BJ (cell line): ENCODE measurements at regions of chr16 and their contacts with region 1.

Region 1: GRCh38 chr16:29877266-29877961 is 14.4 kb upstream of the CDIPT start:
- DNase-seq: no peak
- H3K4me3 ChIP-seq: no peak overlapping the region
- H3K27me3 ChIP-seq: peaks cover 4% of the 10 kb centered on the region; the same call in 1 of the 2 replicates
- CTCF ChIP-seq: no peak

Region 2: DNA sequence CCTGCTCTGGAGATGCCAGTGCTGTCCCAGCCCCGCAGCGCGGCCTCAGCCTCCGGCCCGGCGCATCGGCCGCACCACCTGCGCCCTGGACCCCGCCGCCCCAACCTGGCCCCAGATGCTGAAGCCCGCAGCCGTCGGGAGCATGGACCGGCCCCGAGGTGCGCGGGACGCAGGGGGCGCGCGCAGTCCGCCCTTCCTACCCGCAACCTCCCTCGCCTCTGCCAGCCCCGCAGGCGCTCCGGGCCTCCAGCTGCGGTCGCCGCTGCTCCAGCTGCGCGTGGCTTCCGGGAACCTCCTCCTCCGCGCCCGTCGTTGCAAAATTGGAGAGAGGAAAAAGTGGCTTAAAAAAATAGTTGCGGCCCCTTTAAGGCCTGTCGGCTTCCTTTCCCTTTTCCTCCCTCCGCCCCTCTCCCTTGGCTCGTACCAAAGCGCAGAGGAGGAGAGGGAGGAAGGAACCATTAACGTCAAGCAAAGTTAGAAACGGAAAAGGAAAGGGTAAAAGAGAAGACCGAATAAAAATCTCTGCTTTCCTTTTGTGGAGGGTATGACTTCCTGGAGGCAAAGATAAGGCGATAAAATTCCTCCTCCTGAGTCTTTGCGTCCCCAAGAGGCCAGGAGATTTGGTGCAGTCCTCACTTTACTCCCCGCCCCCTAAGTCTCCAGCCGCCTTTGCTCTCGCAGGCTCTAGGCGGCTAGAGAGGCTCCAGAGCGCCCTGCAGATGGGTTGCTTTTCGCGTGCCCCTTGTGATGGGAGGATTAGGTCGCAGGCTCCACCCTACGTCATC is 14.3 kb before region 1 on chr16 and contains the start of gene CDIPT:
- CTCF ChIA-PET with region 1: interaction called, 10 read pairs
- POLR2A ChIA-PET with region 1: no interaction called
- DNase-seq: peak; percentile 61
- H3K4me3 ChIP-seq: peak within 1 kb of the TSS; percentile 87
- H3K27me3 ChIP-seq: no peaks in the 10 kb centered on the region
- CTCF ChIP-seq: peak; percentile 55
- polyA plus RNA-seq, gene CDIPT: 148 and 225 TPM in 2 replicates

Region 3: GRCh38 chr16:29891525-29892457 is 14.4 kb after region 1 on chr16:
- CTCF ChIA-PET with region 1: no interaction called
- POLR2A ChIA-PET with region 1: no interaction called
- DNase-seq: no peak
- H3K4me3 ChIP-seq: no peak overlapping the region
- H3K27me3 ChIP-seq: no peaks in the 10 kb centered on the region
- CTCF ChIP-seq: no peak